PC-9 (cell line): ENCODE measurements at regions of chr16 and their contacts with region 1.

Region 1: GRCh38 chr16:68921654-68922053 is 78.3 kb downstream of the TANGO6 start:
- DNase-seq: peak; percentile 67 to 97
- H3K4me3 ChIP-seq: peak overlapping the region; percentile 8; the same call in 1 of the 2 replicates
- H3K27ac ChIP-seq: peak overlapping the region; percentile 96
- H3K4me1 ChIP-seq: peaks cover 49% of the 10 kb centered on the region
- H3K27me3 ChIP-seq: no peaks in the 10 kb centered on the region
- CTCF ChIP-seq: no peak

Region 2: GRCh38 chr16:68951991-68952877 is 30.6 kb after region 1 on chr16:
- CTCF ChIA-PET with region 1: no interaction called
- POLR2A ChIA-PET with region 1: no interaction called
- intact Hi-C with region 1: no loop called
- DNase-seq: peak in 1 of 2 experiments; percentile 84
- H3K4me3 ChIP-seq: no peak overlapping the region
- H3K27ac ChIP-seq: peak overlapping the region; percentile 45
- H3K4me1 ChIP-seq: peaks cover 28% of the 10 kb centered on the region
- H3K27me3 ChIP-seq: no peaks in the 10 kb centered on the region
- CTCF ChIP-seq: no peak

Region 3: GRCh38 chr16:69330286-69331109 is 408.8 kb after region 1 on chr16 and contains the start of gene PDF:
- CTCF ChIA-PET with region 1: no interaction called
- POLR2A ChIA-PET with region 1: interaction called, 10 read pairs
- intact Hi-C with region 1: no loop called
- DNase-seq: peak; percentile 85 to 94
- H3K4me3 ChIP-seq: peak within 1 kb of the TSS; percentile 87
- H3K27ac ChIP-seq: peak within 1 kb of the TSS; percentile 64
- H3K4me1 ChIP-seq: peaks cover 44% of the 10 kb centered on the region
- H3K27me3 ChIP-seq: no peaks in the 10 kb centered on the region
- CTCF ChIP-seq: no peak
- total RNA-seq, gene PDF: 16.7 and 20.3 TPM in 2 replicates